Naive thymus-derived CD8-positive, alpha-beta T cell (primary cell): ENCODE measurements at regions of chr6 and their contacts with region 1.

Region 1: GRCh38 chr6:53348371-53349208 is at the start of gene ELOVL5:
- DNase-seq: peak; percentile 83 to 96 (median 92)
- ATAC-seq: peak; percentile 71 to 77
- H3K4me3 Mint-ChIP-seq: peak within 1 kb of the TSS; percentile 88 to 98 (median 96)
- H3K27ac Mint-ChIP-seq: peak within 1 kb of the TSS; percentile 91 to 98 (median 97)
- H3K4me1 Mint-ChIP-seq: peaks cover 29 to 47% (median 46%) of the 10 kb centered on the region in 4 donors
- H3K27me3 Mint-ChIP-seq: no peaks in the 10 kb centered on the region
- polyA plus RNA-seq, gene ELOVL5: 32.5 to 38.1 (median 33.0) TPM

Region 2: GRCh38 chr6:53209681-53210080 is 138.9 kb before region 1 on chr6:
- POLR2A ChIA-PET with region 1: no interaction called
- DNase-seq: no peak
- ATAC-seq: no peak
- H3K4me3 Mint-ChIP-seq: no peak overlapping the region
- H3K27ac Mint-ChIP-seq: no peak overlapping the region
- H3K4me1 Mint-ChIP-seq: peaks cover 0 to 18% (median 8%) of the 10 kb centered on the region in 4 donors
- H3K27me3 Mint-ChIP-seq: no peaks in the 10 kb centered on the region

Region 3: GRCh38 chr6:53290537-53291510 is 57.8 kb before region 1 on chr6:
- POLR2A ChIA-PET with region 1: interaction called, 20 read pairs
- DNase-seq: peak in 4 of 10 donors; percentile 11 to 63 (median 56)
- ATAC-seq: peak; percentile 87 to 93
- H3K4me3 Mint-ChIP-seq: peak overlapping the region; percentile 20 to 64 (median 44)
- H3K27ac Mint-ChIP-seq: peak overlapping the region; percentile 31 to 92 (median 84)
- H3K4me1 Mint-ChIP-seq: peaks cover 24 to 87% (median 58%) of the 10 kb centered on the region in 4 donors
- H3K27me3 Mint-ChIP-seq: no peaks in the 10 kb centered on the region

Region 4: DNA sequence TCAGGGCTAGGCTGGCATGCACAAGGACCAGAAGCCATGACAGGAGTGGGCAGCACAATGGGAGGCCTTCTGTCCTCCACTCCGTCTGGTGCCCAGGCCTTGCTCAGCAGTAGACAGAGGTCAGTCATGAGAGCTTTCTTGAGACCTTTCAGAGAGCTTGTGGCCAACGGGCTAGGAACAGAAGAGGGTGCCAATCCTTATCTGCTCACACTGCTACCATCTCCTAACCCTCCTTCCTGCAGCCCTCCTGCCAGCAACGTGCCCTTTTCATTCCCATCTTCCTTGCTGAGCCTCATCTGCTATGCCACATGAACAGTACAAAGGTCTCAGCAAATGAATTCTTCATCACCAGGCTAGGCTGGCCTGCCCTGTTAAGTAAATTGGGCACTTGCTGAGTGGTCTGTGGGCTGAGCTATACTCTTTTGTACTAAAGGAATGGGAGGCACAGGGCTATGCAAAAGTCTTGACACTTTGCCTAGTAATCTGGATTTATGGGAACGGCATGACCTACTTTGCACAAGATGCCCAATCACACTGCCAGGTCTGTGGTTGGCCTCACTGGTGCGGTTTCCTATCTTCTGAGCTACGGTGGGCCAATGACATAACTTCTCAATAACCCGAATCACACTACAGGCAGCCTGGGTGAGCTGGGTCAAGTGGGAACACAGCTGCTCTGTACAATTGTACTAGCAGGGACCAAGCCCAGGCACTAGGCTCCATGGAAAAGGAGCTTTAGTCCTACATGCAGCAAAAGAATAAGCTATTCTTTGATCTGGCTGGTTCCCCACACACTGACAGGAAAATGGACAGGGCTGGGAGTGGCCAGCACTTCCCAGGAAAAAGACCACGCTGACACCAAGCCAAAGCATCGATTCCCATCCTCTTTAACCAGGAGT is 47.7 kb before region 1 on chr6:
- POLR2A ChIA-PET with region 1: interaction called, 33 read pairs
- DNase-seq: no peak
- ATAC-seq: peak in 1 of 2 donors; percentile 6
- H3K4me3 Mint-ChIP-seq: peak overlapping the region in 8 of 10 donors; percentile 11 to 49 (median 38)
- H3K27ac Mint-ChIP-seq: peak overlapping the region in 9 of 10 donors; percentile 13 to 84 (median 61)
- H3K4me1 Mint-ChIP-seq: peaks cover 36 to 83% (median 65%) of the 10 kb centered on the region in 4 donors
- H3K27me3 Mint-ChIP-seq: no peaks in the 10 kb centered on the region

Region 5: DNA sequence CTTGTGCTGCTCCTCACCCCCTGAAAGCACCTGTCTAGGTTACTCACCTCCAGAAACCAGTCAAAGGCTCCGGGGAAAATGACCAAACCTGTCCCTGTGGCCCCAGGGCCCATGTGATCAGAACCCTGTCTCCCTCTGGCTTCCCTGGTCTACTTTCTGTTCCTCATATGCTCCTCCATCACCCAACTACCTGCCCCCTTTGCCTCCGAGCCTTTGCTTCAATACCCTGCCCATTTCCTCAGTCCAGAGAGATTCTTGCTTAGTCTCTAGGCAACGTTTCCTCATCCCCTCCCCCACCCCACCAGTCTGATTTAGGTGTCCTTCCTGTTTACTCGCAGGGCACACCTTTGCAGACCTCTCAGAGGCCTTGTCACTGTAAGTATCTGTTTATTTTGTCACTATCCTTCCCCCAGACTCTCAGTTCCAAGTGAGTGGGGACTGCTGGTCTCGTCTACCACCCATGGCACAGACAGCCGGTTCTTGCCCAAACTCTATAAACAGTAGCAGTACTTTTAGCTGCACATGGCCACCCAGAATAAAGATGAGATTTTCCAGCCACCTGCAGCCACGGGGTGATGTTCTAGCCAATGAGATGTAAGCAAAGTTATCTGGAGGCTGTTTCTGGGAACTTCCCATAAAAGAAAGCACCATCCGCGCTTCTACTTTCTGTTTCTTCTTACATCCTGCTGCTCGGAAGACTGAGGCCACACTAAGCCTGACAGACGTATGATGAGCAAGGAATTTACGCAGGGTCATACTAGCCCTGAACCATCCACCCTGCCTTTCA is 13.2 kb before region 1 on chr6:
- POLR2A ChIA-PET with region 1: interaction called, 75 read pairs
- DNase-seq: peak; percentile 28 to 89 (median 72)
- ATAC-seq: peak; percentile 73 to 85
- H3K4me3 Mint-ChIP-seq: peak overlapping the region; percentile 84 to 99 (median 90)
- H3K27ac Mint-ChIP-seq: peak overlapping the region; percentile 96 to 100 (median 100)
- H3K4me1 Mint-ChIP-seq: peaks cover 43 to 96% (median 88%) of the 10 kb centered on the region in 4 donors
- H3K27me3 Mint-ChIP-seq: no peaks in the 10 kb centered on the region

Region 6: DNA sequence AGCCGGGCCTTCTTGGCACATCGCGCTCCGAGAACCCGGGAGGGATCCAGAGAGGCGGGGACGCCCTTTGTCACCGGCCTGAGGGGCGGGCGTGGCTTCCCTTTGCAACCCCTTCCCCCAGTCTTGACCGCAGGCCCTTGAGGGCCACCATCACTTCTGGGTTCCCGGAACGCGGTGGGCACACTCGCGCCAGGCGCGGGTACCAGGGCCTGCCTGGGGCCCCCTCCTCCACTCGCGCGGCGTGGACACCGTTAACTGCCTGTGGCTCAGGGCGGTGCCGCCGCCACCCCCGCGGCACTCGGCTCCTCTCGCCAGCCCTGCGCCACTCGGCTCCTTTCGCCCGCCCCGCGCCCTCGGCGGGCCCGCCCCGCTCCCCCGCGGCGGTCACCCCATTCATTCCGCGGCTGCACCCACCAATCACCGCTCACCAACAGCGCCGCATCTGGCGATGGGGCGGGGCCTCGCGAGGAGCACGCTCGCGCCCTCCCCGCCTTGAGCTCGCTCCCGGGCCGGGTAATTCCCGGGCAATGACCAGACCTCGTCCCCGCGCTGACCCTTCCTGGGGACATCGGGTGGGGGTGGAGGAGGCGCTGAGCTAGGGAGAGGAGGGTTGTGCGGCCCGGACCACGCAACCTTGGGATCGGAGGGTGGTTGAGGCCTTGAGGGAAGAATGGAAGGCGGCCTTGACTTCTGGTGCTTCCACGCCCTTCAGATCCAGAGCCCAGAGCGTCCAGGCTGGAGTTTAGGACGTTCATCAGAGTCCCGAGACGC is 10.7 kb after region 1 on chr6:
- POLR2A ChIA-PET with region 1: interaction called, 66 read pairs
- DNase-seq: peak; percentile 77 to 91 (median 86)
- ATAC-seq: peak; percentile 72 to 80
- H3K4me3 Mint-ChIP-seq: peak overlapping the region; percentile 87 to 94 (median 92)
- H3K27ac Mint-ChIP-seq: peak overlapping the region; percentile 93 to 98 (median 96)
- H3K4me1 Mint-ChIP-seq: peaks cover 24 to 54% (median 45%) of the 10 kb centered on the region in 4 donors
- H3K27me3 Mint-ChIP-seq: no peaks in the 10 kb centered on the region

Region 7: GRCh38 chr6:53437557-53438202 is 89.1 kb after region 1 on chr6:
- POLR2A ChIA-PET with region 1: no interaction called
- DNase-seq: peak in 5 of 10 donors; percentile 7 to 35 (median 31)
- ATAC-seq: peak; percentile 52
- H3K4me3 Mint-ChIP-seq: no peak overlapping the region
- H3K27ac Mint-ChIP-seq: peak overlapping the region in 1 of 10 donors; percentile 16
- H3K4me1 Mint-ChIP-seq: peaks cover 0 to 6% (median 0%) of the 10 kb centered on the region in 4 donors
- H3K27me3 Mint-ChIP-seq: peaks cover 0 to 6% (median 4%) of the 10 kb centered on the region in 5 donors

Region 8: GRCh38 chr6:55153284-55153683 is 1804.7 kb after region 1 on chr6:
- POLR2A ChIA-PET with region 1: no interaction called
- DNase-seq: no peak
- ATAC-seq: no peak
- H3K4me3 Mint-ChIP-seq: no peak overlapping the region
- H3K27ac Mint-ChIP-seq: no peak overlapping the region
- H3K4me1 Mint-ChIP-seq: no peaks in the 10 kb centered on the region
- H3K27me3 Mint-ChIP-seq: no peaks in the 10 kb centered on the region